ENCODE measurements at regions of chr9 and their contacts with region 1.

Region 1: DNA sequence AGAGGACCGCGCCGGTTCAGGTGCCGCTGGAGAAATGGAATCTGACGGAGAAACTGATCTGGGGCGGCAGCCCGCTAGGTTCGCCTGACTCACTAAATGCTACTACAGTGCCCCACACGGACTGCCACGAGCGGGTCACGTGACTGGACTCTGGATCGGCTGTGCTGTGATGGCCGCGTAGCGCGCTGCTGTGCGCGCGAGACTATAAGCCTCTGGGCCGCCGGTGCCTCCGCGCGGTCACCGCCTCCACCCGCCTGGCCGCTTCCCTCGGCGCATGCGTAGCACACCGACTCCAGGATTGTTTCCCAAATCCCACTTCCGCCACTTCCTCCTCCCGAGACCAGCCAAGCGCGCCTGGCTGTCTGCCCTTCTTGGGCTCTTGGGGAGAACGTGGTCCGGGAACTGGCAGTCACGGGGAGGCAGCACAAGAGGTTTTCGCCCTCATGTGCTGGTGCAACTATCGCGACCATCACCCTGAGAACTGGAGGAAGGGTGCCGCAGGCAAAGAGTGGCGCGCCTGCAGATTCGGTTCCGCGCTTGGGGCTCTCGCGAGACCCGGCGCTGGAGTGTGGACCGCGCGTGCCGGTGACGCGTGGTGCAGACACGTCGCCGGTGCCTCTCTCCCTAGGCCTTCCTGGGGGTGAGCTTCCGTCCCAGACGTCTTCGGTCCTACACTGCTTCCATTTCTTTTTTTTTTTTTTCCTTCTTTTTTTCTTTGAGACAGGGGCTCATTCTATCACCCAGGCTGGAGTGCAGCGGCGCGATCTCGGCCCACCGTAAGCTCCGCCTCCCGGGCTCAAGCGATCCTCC is 35.8 kb upstream of the GLDC start:
- DNase-seq: peak; percentile 88
- H3K4me3 Mint-ChIP-seq: peak overlapping the region; percentile 94
- H3K27ac Mint-ChIP-seq: peak overlapping the region; percentile 99
- H3K4me1 Mint-ChIP-seq: peaks cover 24% of the 10 kb centered on the region
- H3K27me3 Mint-ChIP-seq: peaks cover 3% of the 10 kb centered on the region

Region 2: GRCh38 chr9:5832543-5833529 is 848.5 kb before region 1 on chr9 and contains the start of gene ERMP1:
- intact Hi-C with region 1: loop called (anchors 5 kb)
- DNase-seq: peak; percentile 89
- H3K4me3 Mint-ChIP-seq: peak within 1 kb of the TSS; percentile 92
- H3K27ac Mint-ChIP-seq: peak within 1 kb of the TSS; percentile 82
- H3K4me1 Mint-ChIP-seq: peaks cover 62% of the 10 kb centered on the region
- H3K27me3 Mint-ChIP-seq: no peaks in the 10 kb centered on the region
- total RNA-seq, gene ERMP1: 23.1 and 24.1 TPM in 2 replicates

Region 3: DNA sequence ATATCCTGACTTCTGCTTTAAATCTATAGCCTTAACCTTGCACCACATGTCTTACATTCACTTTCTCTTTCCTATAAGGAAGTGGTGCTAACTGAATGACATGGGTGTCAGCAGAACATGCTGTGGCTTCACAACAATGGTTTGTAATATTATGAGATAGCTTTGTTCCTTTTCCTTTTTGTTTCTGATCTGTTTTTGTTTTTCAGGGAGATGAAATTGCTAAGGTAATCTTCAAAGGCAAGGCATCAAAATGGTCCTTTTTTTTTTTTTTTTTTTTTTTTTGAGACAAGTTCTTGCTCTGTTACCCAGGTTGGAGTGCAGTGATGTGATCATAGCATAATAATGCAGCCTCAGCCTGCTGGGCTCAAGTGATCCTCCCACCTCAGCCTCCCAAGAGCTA is 612.4 kb before region 1 on chr9:
- intact Hi-C with region 1: loop called (anchors 1 kb)
- DNase-seq: peak; percentile 24
- H3K4me3 Mint-ChIP-seq: peak overlapping the region; percentile 61
- H3K27ac Mint-ChIP-seq: peak overlapping the region; percentile 88
- H3K4me1 Mint-ChIP-seq: peaks cover 20% of the 10 kb centered on the region
- H3K27me3 Mint-ChIP-seq: peaks cover 2% of the 10 kb centered on the region

Region 4: GRCh38 chr9:6598249-6598725 is 83.1 kb before region 1 on chr9:
- intact Hi-C with region 1: loop called (anchors 1 kb)
- DNase-seq: no peak
- H3K4me3 Mint-ChIP-seq: no peak overlapping the region
- H3K27ac Mint-ChIP-seq: peak overlapping the region; percentile 56
- H3K4me1 Mint-ChIP-seq: peaks cover 6% of the 10 kb centered on the region
- H3K27me3 Mint-ChIP-seq: no peaks in the 10 kb centered on the region

Region 5: DNA sequence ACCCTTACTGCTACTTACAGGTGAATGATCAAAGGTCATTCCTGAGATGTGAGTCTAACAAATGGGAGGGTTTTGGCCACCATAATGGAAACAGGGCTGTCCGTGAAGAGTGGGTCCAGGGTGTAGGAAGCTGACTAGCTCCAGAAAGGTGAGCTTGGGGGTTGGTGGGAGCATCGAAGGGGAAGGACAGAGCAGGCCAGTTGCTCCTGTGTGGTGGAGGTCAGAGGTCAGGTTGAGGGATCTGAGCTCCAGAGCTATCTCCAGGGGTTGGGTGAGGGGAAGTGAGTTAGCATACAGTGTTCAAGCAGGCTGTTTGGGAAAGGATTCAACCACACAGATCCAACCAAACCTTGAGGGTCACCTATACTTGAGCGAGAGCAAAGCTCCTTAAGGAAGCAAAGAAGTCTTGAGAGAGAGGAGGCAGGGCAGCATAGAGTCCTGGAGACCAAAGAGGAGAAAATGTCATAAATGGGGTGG is 17.1 kb before region 1 on chr9:
- intact Hi-C with region 1: no loop called
- DNase-seq: no peak
- H3K4me3 Mint-ChIP-seq: no peak overlapping the region
- H3K27ac Mint-ChIP-seq: no peak overlapping the region
- H3K4me1 Mint-ChIP-seq: no peaks in the 10 kb centered on the region
- H3K27me3 Mint-ChIP-seq: peaks cover 3% of the 10 kb centered on the region

Region 6: GRCh38 chr9:6703898-6704639 is 22.7 kb after region 1 on chr9:
- intact Hi-C with region 1: loop called (anchors 1 kb)
- DNase-seq: peak; percentile 84
- H3K4me3 Mint-ChIP-seq: peak overlapping the region; percentile 89
- H3K27ac Mint-ChIP-seq: peak overlapping the region; percentile 91
- H3K4me1 Mint-ChIP-seq: peaks cover 14% of the 10 kb centered on the region
- H3K27me3 Mint-ChIP-seq: peaks cover 4% of the 10 kb centered on the region

Region 7: GRCh38 chr9:6779417-6780241 is 98.3 kb after region 1 on chr9:
- intact Hi-C with region 1: no loop called
- DNase-seq: no peak
- H3K4me3 Mint-ChIP-seq: no peak overlapping the region
- H3K27ac Mint-ChIP-seq: no peak overlapping the region
- H3K4me1 Mint-ChIP-seq: peaks cover 42% of the 10 kb centered on the region
- H3K27me3 Mint-ChIP-seq: no peaks in the 10 kb centered on the region

Measured in activated T-helper 1 cell treated with anti-CD3 and anti-CD28 coated beads, Interleukin-12 subunit alpha, Interleukin-12 subunit beta, Interleukin-2, Interleukin-4 antibody, amounts not matched to agents 30 ng/mL and 10 ng/mL and 1 ng/mL, durations not matched to agents 14 hours and 24 hours and 36 hours (primary cell).